AG04449 (cell line): ENCODE measurements at regions of chr1 and their contacts with region 1.

Region 1: GRCh38 chr1:214123061-214123784 is 135.4 kb downstream of the PROX1 start:
- DNase-seq: no peak
- H3K4me3 ChIP-seq: no peak overlapping the region
- CTCF ChIP-seq: peak; percentile 48

Region 2: DNA sequence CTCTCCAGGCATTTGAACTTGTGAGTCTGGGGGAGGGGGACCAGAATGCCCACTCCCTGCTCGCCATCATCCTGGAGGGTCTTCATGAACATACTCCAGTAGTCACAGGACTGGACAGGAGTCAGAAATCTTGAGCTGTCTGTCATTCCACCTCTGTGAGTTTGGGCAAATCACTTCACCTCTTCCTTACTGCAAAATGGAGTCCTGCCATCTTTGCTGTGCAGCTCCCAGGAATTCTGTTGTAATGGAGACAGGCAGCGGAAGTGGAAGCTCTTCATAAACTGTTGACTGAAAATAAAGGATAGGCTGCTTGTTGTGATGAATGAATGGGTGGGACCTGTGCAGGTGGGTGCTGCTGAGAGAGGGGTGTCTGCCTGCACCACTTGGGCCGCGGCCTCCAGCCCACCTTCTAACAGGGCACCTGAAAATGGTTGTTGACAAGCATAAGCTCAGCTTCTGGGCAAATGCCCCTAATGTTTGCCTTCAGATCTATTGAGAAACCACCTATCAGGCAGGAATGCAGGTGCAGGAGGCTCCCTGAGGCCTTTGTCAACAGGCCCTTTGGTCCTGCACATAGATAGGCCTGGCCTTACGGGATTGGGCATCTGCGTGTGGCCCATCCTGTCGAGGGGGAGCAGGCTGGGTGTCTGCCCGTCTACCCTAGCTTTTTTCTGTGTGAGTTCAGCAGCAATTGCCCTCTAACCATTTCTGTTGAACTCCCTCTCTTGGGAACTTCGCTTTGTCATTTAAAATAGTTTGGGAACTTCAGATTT is 751.2 kb before region 1 on chr1:
- CTCF ChIA-PET with region 1: interaction called, 12 read pairs
- POLR2A ChIA-PET with region 1: no interaction called
- DNase-seq: no peak
- H3K4me3 ChIP-seq: no peak overlapping the region
- CTCF ChIP-seq: no peak

Region 3: DNA sequence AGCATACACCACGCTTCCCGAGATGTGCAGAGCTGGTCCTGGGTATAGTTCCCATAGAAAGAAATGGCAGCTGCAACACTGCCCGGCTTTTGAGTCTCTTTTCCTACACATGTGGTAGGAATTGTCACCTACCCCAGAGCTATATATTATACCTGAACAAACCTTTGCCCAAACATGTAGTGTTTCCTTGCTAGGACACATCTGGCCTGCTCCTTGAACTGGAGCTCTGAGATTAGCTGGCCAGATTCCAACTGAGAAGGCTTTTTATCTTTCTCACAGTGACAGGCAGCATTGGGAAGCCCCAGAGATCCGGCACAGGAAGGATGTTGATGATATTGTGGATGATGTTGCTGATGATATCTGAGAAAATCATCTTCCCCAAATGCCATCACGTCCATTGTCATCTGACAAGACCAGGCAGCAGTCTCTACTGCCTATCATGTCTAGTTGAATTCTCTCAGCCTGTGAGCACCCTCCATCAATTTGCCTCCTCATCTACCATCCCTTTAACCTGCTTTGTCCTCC is 42.7 kb after region 1 on chr1:
- CTCF ChIA-PET with region 1: no interaction called
- POLR2A ChIA-PET with region 1: no interaction called
- DNase-seq: no peak
- H3K4me3 ChIP-seq: no peak overlapping the region
- CTCF ChIP-seq: no peak